HepG2 (cell line): ENCODE measurements at regions of chr2 and their contacts with region 1.

Region 1: GRCh38 chr2:73233154-73233931 is at the start of gene PRADC1:
- DNase-seq: peak; percentile 100
- ATAC-seq: peak; percentile 90
- H3K4me3 ChIP-seq: peak within 1 kb of the TSS; percentile 84 to 97 (median 89)
- H3K27ac ChIP-seq: peak within 1 kb of the TSS; percentile 78
- H3K4me1 ChIP-seq: peaks cover 39% of the 10 kb centered on the region
- H3K27me3 ChIP-seq: peaks cover 0 to 6% of the 10 kb centered on the region in 2 experiments; a peak in 1 of 5 replicates
- CTCF ChIP-seq: peak; percentile 27; the same call in 1 of the 2 replicates
- EP300 ChIP-seq: peak in 1 of 2 experiments; percentile 42; a peak in 1 of 4 replicates
- POLR2A ChIP-seq: peak; percentile 23 to 80; a peak in 2 of 4 replicates
- RAD21 ChIP-seq: 0 out of 2 replicates have a peak, but pooled peaks have one; percentile 25
- total RNA-seq, gene PRADC1: 30.0 and 37.2 TPM in 2 replicates

Region 2: GRCh38 chr2:73187549-73187948 is 45.8 kb before region 1 on chr2:
- CTCF ChIA-PET with region 1: no interaction called
- POLR2A ChIA-PET with region 1: interaction called, 26 read pairs
- in situ Hi-C with region 1: no loop called
- intact Hi-C with region 1: no loop called
- DNase-seq: no peak
- ATAC-seq: no peak
- H3K4me3 ChIP-seq: no peak overlapping the region
- H3K27ac ChIP-seq: no peak overlapping the region
- H3K4me1 ChIP-seq: peaks cover 49% of the 10 kb centered on the region
- H3K27me3 ChIP-seq: 0 out of 5 replicates have a peak, but pooled peaks cover 0 to 4% of the 10 kb centered on the region in 2 experiments
- CTCF ChIP-seq: no peak
- EP300 ChIP-seq: no peak
- POLR2A ChIP-seq: no peak
- RAD21 ChIP-seq: no peak

Region 3: GRCh38 chr2:73218298-73218697 is 15.0 kb before region 1 on chr2:
- CTCF ChIA-PET with region 1: no interaction called
- POLR2A ChIA-PET with region 1: interaction called, 125 read pairs
- in situ Hi-C with region 1: no loop called
- intact Hi-C with region 1: loop called (anchors 1 kb)
- DNase-seq: no peak
- ATAC-seq: no peak
- H3K4me3 ChIP-seq: no peak overlapping the region
- H3K27ac ChIP-seq: no peak overlapping the region
- H3K4me1 ChIP-seq: peaks cover 24% of the 10 kb centered on the region
- H3K27me3 ChIP-seq: no peaks in the 10 kb centered on the region
- CTCF ChIP-seq: no peak
- EP300 ChIP-seq: no peak
- POLR2A ChIP-seq: no peak
- RAD21 ChIP-seq: no peak

Region 4: DNA sequence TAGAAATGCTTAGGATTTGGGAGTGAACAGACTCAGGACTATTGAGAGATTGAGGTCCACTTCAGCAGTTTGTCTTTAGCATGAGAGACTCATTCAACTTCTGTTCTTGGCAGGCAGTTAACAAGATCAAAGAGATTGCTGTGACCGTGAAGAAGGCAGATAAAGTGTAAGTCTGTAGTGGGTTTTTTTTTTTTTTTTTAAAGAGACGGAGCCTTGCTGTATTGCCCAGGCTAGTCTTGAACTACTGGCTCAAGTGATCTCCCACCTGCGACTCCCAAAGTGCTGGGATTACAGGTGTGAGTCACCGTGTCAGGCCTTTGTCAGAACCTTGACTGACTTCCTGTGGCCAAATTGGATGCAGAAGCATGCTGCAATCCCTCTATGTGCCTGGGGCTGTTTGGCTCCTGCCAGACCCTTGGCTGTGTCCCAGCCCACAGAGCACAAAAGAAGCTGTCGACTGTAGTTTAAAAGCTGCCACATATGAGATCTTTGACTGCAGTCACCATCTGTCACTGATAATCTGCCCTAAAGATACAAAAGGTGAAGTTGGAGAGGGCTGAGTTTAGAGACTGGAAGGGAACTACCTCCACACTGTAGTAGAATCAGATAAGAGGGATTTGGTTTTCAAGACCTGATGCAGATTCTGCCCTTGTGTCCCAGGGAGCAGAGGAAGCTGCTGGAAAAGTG is 10.7 kb after region 1 on chr2:
- CTCF ChIA-PET with region 1: no interaction called
- POLR2A ChIA-PET with region 1: interaction called, 22 read pairs
- in situ Hi-C with region 1: no loop called
- intact Hi-C with region 1: no loop called
- DNase-seq: no peak
- ATAC-seq: no peak
- H3K4me3 ChIP-seq: no peak overlapping the region
- H3K27ac ChIP-seq: no peak overlapping the region
- H3K4me1 ChIP-seq: peaks cover 29% of the 10 kb centered on the region
- H3K27me3 ChIP-seq: no peaks in the 10 kb centered on the region
- CTCF ChIP-seq: no peak
- EP300 ChIP-seq: no peak
- POLR2A ChIP-seq: no peak
- RAD21 ChIP-seq: no peak

Region 5: GRCh38 chr2:73253901-73254300 is 20.6 kb after region 1 on chr2:
- CTCF ChIA-PET with region 1: no interaction called
- POLR2A ChIA-PET with region 1: interaction called, 10 read pairs
- in situ Hi-C with region 1: no loop called
- intact Hi-C with region 1: no loop called
- DNase-seq: no peak
- ATAC-seq: no peak
- H3K4me3 ChIP-seq: no peak overlapping the region
- H3K27ac ChIP-seq: no peak overlapping the region
- H3K4me1 ChIP-seq: peaks cover 15% of the 10 kb centered on the region
- H3K27me3 ChIP-seq: no peaks in the 10 kb centered on the region
- CTCF ChIP-seq: no peak
- EP300 ChIP-seq: no peak
- POLR2A ChIP-seq: peak; percentile 19 to 38; a peak in 2 of 4 replicates
- RAD21 ChIP-seq: no peak

Region 6: GRCh38 chr2:73260034-73260984 is 27.0 kb after region 1 on chr2:
- CTCF ChIA-PET with region 1: no interaction called
- POLR2A ChIA-PET with region 1: interaction called, 15 read pairs
- in situ Hi-C with region 1: no loop called
- intact Hi-C with region 1: loop called (anchors 1 kb)
- DNase-seq: peak; percentile 72
- ATAC-seq: peak; percentile 65
- H3K4me3 ChIP-seq: no peak overlapping the region
- H3K27ac ChIP-seq: no peak overlapping the region
- H3K4me1 ChIP-seq: peaks cover 51% of the 10 kb centered on the region
- H3K27me3 ChIP-seq: no peaks in the 10 kb centered on the region
- CTCF ChIP-seq: peak; percentile 96
- EP300 ChIP-seq: no peak
- POLR2A ChIP-seq: no peak
- RAD21 ChIP-seq: peak; percentile 89

Region 7: GRCh38 chr2:73284296-73285158 is 51.2 kb after region 1 on chr2 and contains the start of gene FBXO41:
- CTCF ChIA-PET with region 1: no interaction called
- POLR2A ChIA-PET with region 1: interaction called, 5 read pairs
- in situ Hi-C with region 1: no loop called
- intact Hi-C with region 1: loop called (anchors 5 kb)
- DNase-seq: peak; percentile 30
- ATAC-seq: peak; percentile 76
- H3K4me3 ChIP-seq: peak within 1 kb of the TSS; percentile 61 to 87 (median 85)
- H3K27ac ChIP-seq: peak within 1 kb of the TSS; percentile 50
- H3K4me1 ChIP-seq: peaks cover 25% of the 10 kb centered on the region
- H3K27me3 ChIP-seq: no peaks in the 10 kb centered on the region; a peak in 1 of 5 replicates
- CTCF ChIP-seq: peak; percentile 45
- EP300 ChIP-seq: 0 out of 4 replicates have a peak, but pooled peaks of 1 of the 2 experiments have one; percentile 15
- POLR2A ChIP-seq: peak in 1 of 2 experiments; percentile 78; a peak in 2 of 4 replicates
- RAD21 ChIP-seq: no peak
- total RNA-seq, gene FBXO41: 3.0 and 4.2 TPM in 2 replicates

Region 8: DNA sequence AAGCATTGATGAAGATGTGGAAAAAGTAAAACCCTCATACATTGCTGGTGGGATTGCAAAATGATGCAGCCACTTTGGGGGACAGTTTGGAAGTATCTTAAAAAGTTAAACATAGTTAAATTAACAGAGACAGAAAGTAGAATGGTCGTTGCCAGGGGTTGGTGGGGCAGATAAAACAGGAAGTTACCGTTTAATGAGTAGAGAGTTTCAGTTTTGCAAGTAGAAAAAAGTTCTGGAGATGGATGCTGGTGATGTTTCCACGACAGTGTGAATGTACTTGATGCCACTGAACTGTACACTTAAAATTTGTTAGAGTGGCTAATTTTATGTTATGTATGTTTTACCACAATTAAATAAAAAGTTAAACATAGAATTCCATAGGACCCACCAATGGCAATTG is 104.5 kb after region 1 on chr2:
- CTCF ChIA-PET with region 1: no interaction called
- POLR2A ChIA-PET with region 1: no interaction called
- in situ Hi-C with region 1: no loop called
- intact Hi-C with region 1: no loop called
- DNase-seq: no peak
- ATAC-seq: no peak
- H3K4me3 ChIP-seq: no peak overlapping the region
- H3K27ac ChIP-seq: no peak overlapping the region
- H3K4me1 ChIP-seq: peaks cover 14% of the 10 kb centered on the region
- H3K27me3 ChIP-seq: no peaks in the 10 kb centered on the region; a peak in 1 of 5 replicates
- CTCF ChIP-seq: no peak
- EP300 ChIP-seq: no peak
- POLR2A ChIP-seq: no peak
- RAD21 ChIP-seq: no peak